ENCODE measurements at regions of chr13 and their contacts with region 1.

Region 1: DNA sequence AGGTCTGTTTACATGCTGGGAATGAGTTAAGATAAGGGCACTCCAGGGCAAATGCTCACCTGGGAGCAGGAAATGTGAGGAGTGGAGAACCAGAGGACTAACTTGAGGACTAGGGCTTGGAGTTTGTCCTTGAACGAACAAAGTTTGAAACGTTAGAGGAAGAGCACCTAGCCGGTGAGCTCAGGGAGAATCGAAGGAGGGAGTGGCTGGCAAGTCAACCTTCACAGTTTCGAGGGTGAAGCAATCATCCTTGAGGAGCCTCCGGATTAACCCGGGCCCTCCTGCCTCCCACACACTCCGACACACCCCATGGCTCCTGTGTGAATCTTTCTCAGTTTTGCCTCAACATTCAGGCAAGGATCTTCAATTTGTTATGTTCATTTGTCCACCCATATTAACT is 58.6 kb downstream of the LMO7 start:
- DNase-seq: no peak
- CTCF ChIP-seq: no peak

Region 2: DNA sequence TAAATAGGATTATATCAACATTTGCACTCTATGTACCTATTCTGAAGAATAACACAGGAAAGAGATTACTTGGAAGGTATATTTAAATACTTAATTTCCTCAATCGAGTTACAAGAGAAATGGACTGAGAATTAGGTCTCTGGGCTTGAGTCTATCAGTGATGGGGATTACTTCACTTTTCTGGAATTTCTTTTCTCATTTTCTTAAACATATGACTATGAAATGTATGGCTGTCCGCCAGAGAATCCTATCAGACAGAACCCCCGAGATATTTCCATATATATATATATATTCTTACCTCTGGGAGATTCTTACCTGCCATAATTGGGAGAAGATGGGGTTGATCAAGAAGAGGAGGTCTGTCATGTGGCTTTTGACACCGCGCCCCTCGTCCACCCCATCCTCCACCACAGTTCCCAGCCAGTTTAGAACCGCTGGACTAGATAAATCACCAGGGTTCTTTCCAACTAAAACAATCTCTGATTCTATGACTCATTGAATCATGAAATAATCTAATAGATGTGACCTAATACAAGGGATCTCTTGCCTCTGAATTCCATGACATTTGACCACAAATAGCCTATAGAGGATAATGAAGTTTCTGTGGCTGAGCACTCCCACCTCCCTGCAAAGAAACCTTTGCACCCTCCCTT is 444.1 kb before region 1 on chr13:
- CTCF ChIA-PET with region 1: no interaction called
- POLR2A ChIA-PET with region 1: no interaction called
- DNase-seq: no peak
- CTCF ChIP-seq: no peak

Region 3: DNA sequence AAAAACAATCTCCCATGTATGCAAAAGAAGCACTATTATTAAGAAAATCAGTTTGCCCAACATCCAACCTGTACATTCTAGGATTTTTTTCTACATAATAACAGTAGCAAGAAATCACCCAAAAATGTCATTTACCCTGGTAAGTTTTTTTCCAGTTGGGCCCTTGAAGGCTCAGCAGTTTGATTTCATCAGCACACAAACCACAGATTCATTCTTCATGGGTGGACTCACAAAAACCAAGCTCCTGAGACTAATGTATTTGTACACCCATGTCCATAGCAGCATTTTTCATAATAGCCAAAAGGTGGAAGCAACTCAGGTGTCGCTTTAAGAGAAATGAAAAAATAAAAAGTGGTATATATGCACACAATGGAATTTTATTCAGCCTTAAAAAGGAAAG is 422.9 kb before region 1 on chr13:
- CTCF ChIA-PET with region 1: no interaction called
- POLR2A ChIA-PET with region 1: no interaction called
- DNase-seq: no peak
- CTCF ChIP-seq: no peak

Region 4: GRCh38 chr13:75645141-75645540 is 49.6 kb before region 1 on chr13:
- CTCF ChIA-PET with region 1: interaction called, 13 read pairs
- POLR2A ChIA-PET with region 1: no interaction called
- DNase-seq: no peak
- CTCF ChIP-seq: no peak

Region 5: DNA sequence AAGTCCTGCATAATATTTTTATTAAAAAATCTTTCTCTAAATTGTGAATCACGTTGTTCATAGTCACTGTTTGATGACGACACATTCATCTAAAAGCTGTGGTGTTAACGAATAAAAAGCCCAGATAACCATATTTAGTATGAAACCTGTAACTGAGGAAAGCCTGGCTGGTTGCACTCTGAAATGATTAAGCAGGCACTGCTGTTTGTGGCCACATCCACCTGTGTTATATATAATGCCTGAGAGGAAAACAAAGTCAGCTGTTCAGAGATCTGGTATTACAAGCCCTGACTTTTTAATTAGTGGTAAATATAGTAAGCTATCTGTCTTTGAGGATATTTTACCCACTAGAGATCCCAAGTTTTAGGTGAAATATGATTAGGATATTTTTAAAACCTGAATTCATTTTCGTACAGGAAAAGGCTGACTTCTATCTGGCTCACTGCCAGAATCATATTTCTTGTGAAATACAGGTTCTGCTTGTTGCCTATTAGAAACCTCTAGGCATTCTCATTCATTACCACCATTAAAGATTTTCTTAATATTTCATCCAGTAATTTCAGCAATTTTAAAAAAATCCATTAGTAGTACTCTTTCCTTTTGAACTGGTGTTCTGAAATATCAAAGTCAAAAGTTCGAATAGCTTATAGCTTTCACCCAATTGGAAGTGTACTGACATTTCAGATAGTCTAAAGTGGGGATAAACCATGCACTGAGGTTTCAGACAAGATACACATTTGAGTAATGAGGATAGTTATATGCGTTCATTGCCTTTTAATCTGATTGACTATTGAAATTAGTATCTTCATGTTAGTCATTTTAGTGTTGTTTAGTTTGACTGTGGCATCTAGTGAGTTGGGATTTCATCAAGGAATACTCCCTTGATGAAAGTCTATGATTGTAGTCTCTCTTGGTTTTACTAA is 21.1 kb after region 1 on chr13:
- CTCF ChIA-PET with region 1: interaction called, 73 read pairs
- POLR2A ChIA-PET with region 1: no interaction called
- DNase-seq: peak; percentile 35
- CTCF ChIP-seq: no peak

Region 6: GRCh38 chr13:75760131-75761021 is 65.7 kb after region 1 on chr13:
- CTCF ChIA-PET with region 1: interaction called, 54 read pairs
- POLR2A ChIA-PET with region 1: no interaction called
- DNase-seq: no peak
- CTCF ChIP-seq: no peak

Region 7: GRCh38 chr13:75811361-75811760 is 116.6 kb after region 1 on chr13:
- CTCF ChIA-PET with region 1: interaction called, 15 read pairs
- POLR2A ChIA-PET with region 1: no interaction called
- DNase-seq: no peak
- CTCF ChIP-seq: no peak

Region 8: DNA sequence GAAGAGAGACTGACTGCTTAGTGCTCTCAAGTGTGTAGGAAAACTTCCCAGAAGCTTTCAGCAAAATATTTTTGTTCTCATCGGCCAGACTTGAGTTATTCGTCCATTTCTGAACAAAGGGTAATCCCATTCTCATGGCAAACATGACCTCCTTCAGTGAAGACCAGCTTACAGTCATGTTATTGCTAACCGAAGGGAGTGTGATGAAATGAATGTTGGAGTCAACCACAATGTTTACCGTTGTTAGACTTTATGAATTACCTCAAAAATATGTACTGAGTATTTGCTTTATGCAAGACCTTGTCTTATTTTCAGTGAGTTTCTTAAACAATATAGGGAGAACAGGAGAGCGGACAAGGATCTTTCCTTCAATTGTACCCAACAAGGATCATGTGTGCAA is 170.0 kb after region 1 on chr13:
- CTCF ChIA-PET with region 1: interaction called, 50 read pairs
- POLR2A ChIA-PET with region 1: no interaction called
- DNase-seq: no peak
- CTCF ChIP-seq: no peak

Region 9: DNA sequence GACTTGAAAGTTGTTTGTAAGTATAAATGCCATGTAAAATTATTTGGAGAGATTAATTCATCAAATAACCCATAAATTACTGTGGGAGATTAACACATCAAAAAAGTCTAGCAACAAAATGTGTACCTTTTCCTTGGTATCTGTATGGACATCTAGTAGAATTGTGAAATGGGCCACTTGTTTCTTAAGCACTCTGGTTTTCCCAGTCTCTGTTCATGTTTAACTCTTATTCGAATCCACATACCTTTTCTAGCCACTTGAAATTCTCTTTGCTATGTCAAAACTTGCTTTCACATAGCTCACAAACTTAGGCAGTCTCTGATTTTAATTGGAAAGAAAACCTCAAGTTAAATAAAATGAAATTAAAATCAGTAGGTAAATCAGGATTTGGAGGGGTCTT is 412.0 kb after region 1 on chr13:
- CTCF ChIA-PET with region 1: no interaction called
- POLR2A ChIA-PET with region 1: no interaction called
- DNase-seq: no peak
- CTCF ChIP-seq: no peak